ENCODE measurements at regions of chr7 and their contacts with region 1.

Region 1: GRCh38 chr7:151032936-151033863 is 5.0 kb downstream of the ABCB8 start:
- DNase-seq: no peak
- H3K4me3 ChIP-seq: no peak overlapping the region
- H3K27ac ChIP-seq: no peak overlapping the region
- H3K4me1 ChIP-seq: peaks cover 4 to 25% (median 13%) of the 10 kb centered on the region in 6 donors
- H3K27me3 ChIP-seq: no peaks in the 10 kb centered on the region
- CTCF ChIP-seq: no peak
- POLR2A ChIP-seq: no peak

Region 2: DNA sequence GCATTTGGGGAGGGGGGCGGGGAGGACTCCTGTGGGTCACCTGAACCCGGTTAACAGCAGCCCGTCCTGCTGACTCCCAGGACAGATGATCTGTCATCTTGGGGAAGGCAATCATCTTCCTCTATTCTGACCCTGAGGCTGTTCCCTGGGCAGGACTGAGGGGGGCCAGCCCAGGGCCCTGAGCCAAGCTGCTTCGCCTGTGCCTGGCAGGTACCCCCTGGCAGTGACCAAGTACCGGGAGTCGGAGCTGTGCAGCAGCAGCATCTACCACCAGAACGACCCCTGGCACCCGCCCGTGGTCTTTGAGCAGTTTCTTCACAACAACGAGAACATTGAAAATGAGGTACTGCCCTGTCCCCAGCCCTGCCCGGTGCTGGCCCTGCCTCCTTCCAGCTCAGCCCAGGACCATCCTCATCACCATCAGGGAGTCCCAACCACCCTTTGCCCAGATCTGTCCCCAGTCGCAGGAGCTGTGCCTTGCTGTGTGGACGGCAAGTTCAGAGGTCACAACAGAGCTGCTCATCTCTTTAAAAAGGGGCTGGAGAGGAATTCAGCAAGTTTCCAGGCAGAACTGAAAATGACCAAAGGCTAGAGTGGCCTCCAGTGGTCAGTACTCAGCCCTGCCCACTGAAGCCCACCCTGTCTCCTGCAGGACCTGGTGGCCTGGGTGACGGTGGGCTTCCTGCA is 172.8 kb before region 1 on chr7:
- intact Hi-C with region 1: no loop called
- DNase-seq: no peak
- H3K4me3 ChIP-seq: no peak overlapping the region
- H3K27ac ChIP-seq: no peak overlapping the region
- H3K4me1 ChIP-seq: no peaks in the 10 kb centered on the region
- H3K27me3 ChIP-seq: peaks cover 0 to 34% (median 0%) of the 10 kb centered on the region in 7 donors
- CTCF ChIP-seq: peak in 1 of 11 experiments; percentile 14
- POLR2A ChIP-seq: no peak

Region 3: DNA sequence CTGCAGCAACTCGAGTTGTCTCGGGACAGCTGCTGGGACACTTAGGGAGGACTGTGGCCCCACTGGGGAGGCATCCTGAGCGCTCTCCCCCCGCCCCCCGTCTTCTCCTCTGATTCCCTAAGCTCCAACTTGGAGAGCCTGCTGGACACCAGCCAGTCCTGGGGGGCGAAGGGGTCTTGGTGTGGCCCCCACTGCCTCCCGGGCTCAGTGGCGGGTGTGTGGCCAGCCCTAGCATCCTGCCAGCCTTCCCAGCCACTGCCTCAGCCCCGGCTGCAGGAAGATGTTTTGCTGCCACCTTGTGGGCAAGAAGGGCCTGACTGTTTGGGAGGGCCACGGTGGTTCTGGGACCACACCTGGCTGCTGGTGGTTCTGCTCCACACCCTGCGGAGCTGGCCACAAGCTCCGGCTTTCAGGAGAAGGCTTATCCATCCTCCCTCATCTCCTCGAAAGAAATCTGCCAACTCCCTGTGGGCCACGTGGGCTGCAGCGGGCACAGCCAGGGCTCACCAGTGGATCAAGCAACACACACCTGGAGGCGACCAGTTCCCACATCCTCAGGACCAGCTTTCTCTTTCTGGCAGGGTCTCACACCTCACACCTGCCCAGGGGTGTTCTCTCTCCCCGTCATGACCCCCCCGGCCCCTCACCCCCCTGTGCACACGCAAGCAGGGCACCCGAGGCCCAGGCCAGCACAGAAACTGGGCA is 77.9 kb after region 1 on chr7:
- intact Hi-C with region 1: loop called (anchors 5 kb)
- DNase-seq: peak; percentile 92
- H3K4me3 ChIP-seq: no peak overlapping the region
- H3K27ac ChIP-seq: no peak overlapping the region
- H3K4me1 ChIP-seq: peaks cover 0 to 40% (median 20%) of the 10 kb centered on the region in 6 donors
- H3K27me3 ChIP-seq: peaks cover 0 to 20% (median 0%) of the 10 kb centered on the region in 7 donors
- CTCF ChIP-seq: peak; percentile 74 to 95 (median 91)
- POLR2A ChIP-seq: no peak

Region 4: DNA sequence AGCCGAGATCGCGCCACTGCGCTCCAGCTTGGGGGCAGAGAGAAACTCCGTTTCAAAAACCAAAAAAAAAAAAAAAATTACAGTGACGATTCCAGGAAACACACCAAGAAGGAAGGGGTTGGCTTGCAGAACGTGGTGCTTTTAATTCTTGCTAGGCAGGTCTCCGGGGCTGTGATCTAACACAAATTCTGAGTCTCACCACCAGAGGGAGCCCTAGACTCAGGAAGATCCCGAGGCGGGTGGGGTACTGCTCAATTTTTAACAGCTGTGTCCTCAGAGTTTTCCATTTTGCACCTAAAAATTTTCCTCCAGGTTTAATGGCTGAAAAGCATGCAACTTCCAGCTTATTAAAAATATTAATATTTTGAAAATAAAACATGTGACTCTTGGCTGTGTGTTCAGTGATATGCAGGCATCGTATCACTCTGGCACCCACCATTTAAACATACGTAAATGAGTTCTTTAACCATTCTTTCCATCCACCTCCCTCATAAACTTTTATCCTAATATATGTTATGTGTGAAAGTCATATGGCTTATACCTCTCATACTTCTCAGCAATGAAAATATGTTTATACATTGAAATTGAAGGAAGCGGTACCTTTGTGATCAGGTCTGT is 281.9 kb after region 1 on chr7:
- intact Hi-C with region 1: no loop called
- DNase-seq: no peak
- H3K4me3 ChIP-seq: no peak overlapping the region
- H3K27ac ChIP-seq: no peak overlapping the region
- H3K4me1 ChIP-seq: peaks cover 0 to 19% (median 9%) of the 10 kb centered on the region in 6 donors
- H3K27me3 ChIP-seq: no peaks in the 10 kb centered on the region
- CTCF ChIP-seq: peak; percentile 67 to 89 (median 79)
- POLR2A ChIP-seq: no peak

Measured in spleen (tissue), 13 donors.